Transverse colon (tissue), 4 donors: ENCODE measurements at regions of chr21 and their contacts with region 1.

Region 1: GRCh38 chr21:14602382-14602958 is 56.4 kb upstream of the SAMSN1 start:
- DNase-seq: no peak
- H3K4me3 ChIP-seq: peak overlapping the region in 1 of 4 donors; percentile 21
- H3K27ac ChIP-seq: no peak overlapping the region
- H3K4me1 ChIP-seq: peaks cover 0 to 10% (median 0%) of the 10 kb centered on the region in 4 donors
- H3K27me3 ChIP-seq: no peaks in the 10 kb centered on the region
- CTCF ChIP-seq: no peak
- EP300 ChIP-seq: no peak
- POLR2A ChIP-seq: no peak

Region 2: DNA sequence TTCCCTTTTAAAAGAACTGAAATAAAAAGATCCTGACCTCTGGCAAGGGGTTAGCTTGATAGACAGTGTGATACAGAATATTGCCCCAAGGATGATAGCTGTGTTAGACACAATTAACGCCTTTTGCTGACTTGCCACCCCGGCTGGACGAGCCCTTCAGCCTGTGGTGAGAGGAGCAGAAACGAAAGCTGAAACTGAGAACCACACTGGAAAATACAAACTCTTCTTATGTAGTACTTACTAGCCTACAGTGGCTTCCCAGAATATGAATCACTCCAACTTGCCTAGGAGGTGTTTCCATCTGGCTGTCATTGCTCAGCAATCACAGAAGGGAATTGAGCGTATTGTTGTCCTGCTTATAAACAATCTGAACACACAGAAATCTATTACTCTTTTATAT is 79.2 kb before region 1 on chr21:
- in situ Hi-C with region 1: loop called in 1 of 4 experiments (anchors 25 kb)
- intact Hi-C with region 1: no loop called
- DNase-seq: no peak
- H3K4me3 ChIP-seq: no peak overlapping the region
- H3K27ac ChIP-seq: peak overlapping the region; percentile 13 to 34 (median 19)
- H3K4me1 ChIP-seq: no peaks in the 10 kb centered on the region
- H3K27me3 ChIP-seq: no peaks in the 10 kb centered on the region
- CTCF ChIP-seq: no peak
- EP300 ChIP-seq: no peak
- POLR2A ChIP-seq: no peak

Region 3: DNA sequence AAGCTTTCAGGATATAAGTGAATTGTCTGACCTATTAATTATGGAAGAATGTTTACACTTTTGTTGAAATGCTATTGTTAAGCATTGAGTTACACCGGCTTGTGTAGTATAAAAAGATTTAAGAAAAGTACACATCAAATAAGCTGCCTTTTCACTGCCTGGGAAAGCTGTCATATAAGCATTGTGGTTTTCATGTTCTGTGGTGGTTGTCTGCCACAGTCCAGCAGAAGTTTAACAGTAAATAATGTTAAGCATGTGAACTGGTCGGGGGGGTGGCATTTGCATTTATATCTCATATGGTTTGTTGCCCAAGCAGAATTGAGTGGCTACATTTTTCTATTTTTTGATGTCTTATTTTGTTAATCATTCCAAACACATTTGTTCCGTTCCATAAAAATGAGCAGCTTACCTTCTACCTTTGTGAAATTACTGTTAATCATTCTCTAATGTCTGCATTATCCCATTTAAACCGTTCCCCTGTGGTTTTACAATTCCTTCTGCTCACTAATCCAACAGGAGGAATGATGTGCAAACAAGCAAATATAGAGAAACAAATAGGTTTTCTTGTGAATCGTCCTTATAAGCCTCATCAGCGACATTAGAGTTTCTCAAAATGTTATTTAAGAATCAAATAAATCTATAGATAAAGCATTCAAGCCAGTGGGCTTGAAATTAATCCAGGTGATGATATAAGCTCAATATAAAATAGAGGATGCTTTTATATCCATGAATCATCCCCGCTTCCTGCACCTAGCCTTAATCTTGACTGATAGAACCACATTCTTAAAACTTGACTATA is 104.4 kb after region 1 on chr21:
- in situ Hi-C with region 1: no loop called
- intact Hi-C with region 1: no loop called
- DNase-seq: no peak
- H3K4me3 ChIP-seq: no peak overlapping the region
- H3K27ac ChIP-seq: no peak overlapping the region
- H3K4me1 ChIP-seq: no peaks in the 10 kb centered on the region
- H3K27me3 ChIP-seq: no peaks in the 10 kb centered on the region
- CTCF ChIP-seq: no peak
- EP300 ChIP-seq: no peak
- POLR2A ChIP-seq: no peak